ENCODE measurements at regions of chr3 and their contacts with region 1.

Region 1: GRCh38 chr3:51799879-51800749 is 21.1 kb upstream of the IQCF6 start:
- DNase-seq: peak; percentile 86
- H3K4me3 Mint-ChIP-seq: no peak overlapping the region
- H3K27ac Mint-ChIP-seq: no peak overlapping the region
- H3K4me1 Mint-ChIP-seq: peaks cover 42% of the 10 kb centered on the region
- H3K27me3 Mint-ChIP-seq: peaks cover 9% of the 10 kb centered on the region

Region 2: GRCh38 chr3:51429138-51429537 is 371.0 kb before region 1 on chr3:
- intact Hi-C with region 1: no loop called
- DNase-seq: no peak
- H3K4me3 Mint-ChIP-seq: no peak overlapping the region
- H3K27ac Mint-ChIP-seq: no peak overlapping the region
- H3K4me1 Mint-ChIP-seq: no peaks in the 10 kb centered on the region
- H3K27me3 Mint-ChIP-seq: no peaks in the 10 kb centered on the region

Region 3: DNA sequence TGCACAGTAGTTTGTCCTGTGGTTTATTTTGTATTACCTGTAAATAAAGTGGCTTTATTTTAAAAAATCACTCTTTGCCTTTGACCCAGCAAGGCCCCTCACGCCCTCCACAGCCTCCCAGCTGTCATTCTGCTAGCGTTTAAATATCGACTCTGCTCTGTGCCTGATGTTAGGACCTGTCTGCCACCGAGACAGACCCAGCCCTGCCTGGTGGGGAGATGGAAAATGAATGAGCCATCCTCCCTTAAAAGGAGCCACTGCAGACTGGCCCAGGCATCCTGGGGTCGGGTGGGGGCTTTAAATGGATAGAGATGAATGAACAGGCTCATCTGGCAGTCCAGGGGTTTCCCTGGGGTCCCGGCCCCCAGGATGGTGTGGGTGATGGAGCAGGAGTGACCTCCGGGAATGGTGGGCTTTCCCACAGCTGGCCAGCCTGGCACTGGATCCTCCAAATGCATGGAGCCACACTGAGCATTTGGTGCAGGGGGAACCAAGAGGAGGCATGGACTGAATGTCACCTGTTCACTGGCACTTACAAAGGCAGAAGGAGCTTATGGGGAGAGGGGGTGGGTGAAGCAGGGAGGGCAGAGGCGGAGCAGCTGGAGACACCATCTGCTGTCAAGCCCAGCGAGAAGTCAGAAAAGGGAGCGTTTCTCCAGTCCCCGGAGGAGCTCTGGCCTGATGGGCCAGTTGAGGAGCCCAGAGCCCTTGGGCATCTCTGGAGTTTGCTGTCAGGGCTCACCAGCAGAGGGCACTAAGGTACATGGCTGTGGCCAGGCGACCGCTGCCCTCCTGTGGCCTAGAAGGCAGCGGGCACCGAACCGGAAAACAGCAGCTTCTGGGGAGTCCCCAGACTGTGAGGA is 81.3 kb before region 1 on chr3:
- intact Hi-C with region 1: loop called (anchors 1 kb)
- DNase-seq: peak; percentile 92
- H3K4me3 Mint-ChIP-seq: no peak overlapping the region
- H3K27ac Mint-ChIP-seq: no peak overlapping the region
- H3K4me1 Mint-ChIP-seq: peaks cover 28% of the 10 kb centered on the region
- H3K27me3 Mint-ChIP-seq: no peaks in the 10 kb centered on the region